H1 (cell line): ENCODE measurements at regions of chr11 and their contacts with region 1.

Region 1: DNA sequence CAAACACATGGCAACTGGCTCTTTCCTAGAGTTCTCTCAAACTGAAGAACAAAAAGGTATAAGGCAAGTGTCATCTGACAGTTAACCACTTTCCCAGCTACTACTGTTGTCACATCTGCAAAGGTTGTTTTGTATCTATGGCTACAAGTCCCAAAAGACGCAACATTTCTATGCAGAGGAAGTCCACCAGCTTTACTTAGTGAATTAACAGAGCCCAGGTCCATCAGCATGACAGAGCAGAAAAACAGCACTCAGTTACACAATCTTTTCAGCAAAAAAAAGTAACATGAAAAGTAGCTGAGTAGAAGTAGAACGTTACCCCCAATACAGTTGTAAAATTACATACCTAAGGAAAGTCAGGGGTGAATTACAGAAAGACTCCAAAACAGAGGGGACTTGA is 12.1 kb downstream of the CPSF7 start:
- DNase-seq: no peak
- H3K4me3 ChIP-seq: no peak overlapping the region
- H3K27ac ChIP-seq: no peak overlapping the region
- H3K4me1 ChIP-seq: no peaks in the 10 kb centered on the region
- H3K27me3 ChIP-seq: no peaks in the 10 kb centered on the region
- CTCF ChIP-seq: no peak
- EP300 ChIP-seq: no peak
- POLR2A ChIP-seq: no peak
- RAD21 ChIP-seq: no peak

Region 2: DNA sequence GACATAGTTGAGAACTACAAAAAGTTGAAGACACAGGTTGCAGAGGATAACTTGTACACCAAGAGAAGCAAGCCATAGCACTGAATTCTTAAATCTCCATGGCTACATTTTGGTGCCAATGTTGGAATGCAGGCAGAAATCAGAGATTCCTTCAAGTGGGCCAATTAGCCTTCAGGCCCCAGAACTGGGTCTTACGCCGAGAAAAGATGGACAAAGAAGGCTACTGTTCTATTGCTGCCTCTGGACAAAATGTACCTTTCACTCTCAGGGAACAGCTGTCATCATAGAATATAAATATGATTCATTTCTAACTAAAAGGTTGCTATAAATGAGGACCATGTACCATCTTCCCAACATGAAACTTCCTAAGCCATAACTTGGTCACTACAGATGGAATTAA is 11.6 kb before region 1 on chr11:
- CTCF ChIA-PET with region 1: no interaction called
- POLR2A ChIA-PET with region 1: interaction called, 27 read pairs
- DNase-seq: no peak
- H3K4me3 ChIP-seq: no peak overlapping the region
- H3K27ac ChIP-seq: no peak overlapping the region
- H3K4me1 ChIP-seq: no peaks in the 10 kb centered on the region
- H3K27me3 ChIP-seq: no peaks in the 10 kb centered on the region
- CTCF ChIP-seq: no peak
- EP300 ChIP-seq: no peak
- POLR2A ChIP-seq: no peak
- RAD21 ChIP-seq: no peak

Region 3: GRCh38 chr11:61429691-61430582 is 12.3 kb after region 1 on chr11 and contains the starts of genes CPSF7 and SDHAF2:
- CTCF ChIA-PET with region 1: interaction called, 3 read pairs
- POLR2A ChIA-PET with region 1: interaction called, 94 read pairs
- DNase-seq: peak; percentile 82 to 98
- H3K4me3 ChIP-seq: peak within 1 kb of the TSS; percentile 76 to 94 (median 89)
- H3K27ac ChIP-seq: peak within 1 kb of the TSS; percentile 97
- H3K4me1 ChIP-seq: no peaks in the 10 kb centered on the region; a peak in 1 of 7 replicates
- H3K27me3 ChIP-seq: no peaks in the 10 kb centered on the region
- CTCF ChIP-seq: no peak
- EP300 ChIP-seq: 0 out of 3 replicates have a peak, but pooled peaks of 1 of the 2 experiments have one; percentile 24
- POLR2A ChIP-seq: peak; percentile 78 to 91
- RAD21 ChIP-seq: no peak
- total RNA-seq, gene CPSF7: 95.9 and 96.7 TPM in 2 replicates
- total RNA-seq, gene SDHAF2: 41.0 and 44.8 TPM in 2 replicates